ENCODE measurements at regions of chr6 and their contacts with region 1.

Region 1: GRCh38 chr6:139375232-139376016 is 976 bp upstream of the CITED2 start:
- DNase-seq: peak; percentile 90 to 93 (median 91)
- H3K4me3 ChIP-seq: peak overlapping the region; percentile 96
- H3K27ac ChIP-seq: peak overlapping the region; percentile 93 to 95
- H3K4me1 ChIP-seq: peaks cover 4% of the 10 kb centered on the region
- H3K27me3 ChIP-seq: no peaks in the 10 kb centered on the region
- CTCF ChIP-seq: no peak
- EP300 ChIP-seq: no peak
- POLR2A ChIP-seq: peak; percentile 54

Region 2: GRCh38 chr6:139457476-139457875 is 82.1 kb after region 1 on chr6:
- intact Hi-C with region 1: no loop called
- DNase-seq: no peak
- H3K4me3 ChIP-seq: no peak overlapping the region
- H3K27ac ChIP-seq: no peak overlapping the region
- H3K4me1 ChIP-seq: peaks cover 2% of the 10 kb centered on the region
- H3K27me3 ChIP-seq: no peaks in the 10 kb centered on the region
- CTCF ChIP-seq: no peak
- EP300 ChIP-seq: no peak
- POLR2A ChIP-seq: no peak

Region 3: DNA sequence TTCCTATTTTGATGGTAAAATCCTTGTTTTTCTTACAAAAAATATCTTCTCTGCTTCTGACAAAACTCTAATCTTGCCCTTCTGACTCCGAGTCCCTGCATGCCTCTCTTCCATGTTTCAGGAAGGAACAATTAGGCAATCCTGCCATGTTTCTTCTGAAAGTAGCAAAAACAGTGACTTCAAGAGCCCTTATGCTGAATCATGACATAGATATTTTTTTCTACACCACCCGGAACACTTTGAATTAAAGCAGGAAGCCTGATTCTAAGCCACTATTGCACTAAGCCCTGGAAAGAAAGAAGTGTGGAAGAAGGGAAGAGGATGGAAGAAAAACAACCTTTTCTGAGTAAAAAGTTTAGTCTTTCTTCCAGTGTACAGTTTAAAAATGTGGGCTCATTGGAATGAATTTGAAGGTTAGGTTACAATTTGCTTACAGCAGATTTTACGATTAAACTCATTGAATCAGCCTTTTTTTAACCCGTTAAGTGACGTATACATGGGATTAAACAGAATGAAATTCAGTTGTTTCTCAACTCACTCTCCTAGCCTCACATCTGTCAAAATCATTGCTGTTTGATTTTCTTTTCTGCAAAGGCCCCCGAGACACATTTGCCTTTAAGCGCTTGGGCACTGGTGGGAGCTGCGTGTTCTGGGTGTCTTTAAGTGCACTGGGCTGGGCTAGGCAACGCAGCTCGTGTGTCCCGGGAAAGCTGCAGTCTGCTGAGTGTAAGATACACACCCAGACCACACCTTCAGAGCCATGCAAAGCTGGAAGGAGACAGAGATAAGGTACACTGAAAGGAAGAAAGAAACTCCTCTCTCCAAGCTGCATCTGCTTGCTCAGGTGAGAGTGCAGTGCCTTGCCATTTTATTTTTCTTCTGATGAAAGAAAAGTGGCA is 158.4 kb after region 1 on chr6:
- intact Hi-C with region 1: loop called in 1 of 4 experiments (anchors 5 kb)
- DNase-seq: peak in 2 of 5 donors; percentile 29 to 46
- H3K4me3 ChIP-seq: no peak overlapping the region
- H3K27ac ChIP-seq: peak overlapping the region in 1 of 2 donors; percentile 76
- H3K4me1 ChIP-seq: peaks cover 10% of the 10 kb centered on the region
- H3K27me3 ChIP-seq: no peaks in the 10 kb centered on the region
- CTCF ChIP-seq: no peak
- EP300 ChIP-seq: no peak
- POLR2A ChIP-seq: no peak

Region 4: DNA sequence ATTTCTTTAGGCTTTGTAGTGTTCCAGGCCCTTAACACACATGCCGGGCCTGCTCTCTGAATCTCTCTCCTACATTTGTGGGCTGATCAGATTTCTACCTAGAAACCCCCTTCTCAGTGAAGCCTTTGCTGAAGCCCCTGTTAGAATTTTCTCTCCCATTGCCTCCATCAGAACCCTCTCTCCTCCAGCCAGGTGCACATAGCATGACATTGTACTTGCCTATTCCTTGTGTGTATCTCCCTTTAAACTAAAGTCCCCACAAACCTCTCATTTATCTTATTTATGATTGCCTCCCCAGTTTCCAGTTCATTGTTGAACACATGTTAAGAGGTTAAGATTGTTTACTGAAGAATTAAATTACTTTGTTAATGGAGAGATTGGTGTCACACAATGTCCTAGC is 324.5 kb after region 1 on chr6:
- intact Hi-C with region 1: loop called in 1 of 4 experiments (anchors 5 kb)
- DNase-seq: no peak
- H3K4me3 ChIP-seq: no peak overlapping the region
- H3K27ac ChIP-seq: no peak overlapping the region
- H3K4me1 ChIP-seq: peaks cover 2% of the 10 kb centered on the region
- H3K27me3 ChIP-seq: no peaks in the 10 kb centered on the region
- CTCF ChIP-seq: no peak
- EP300 ChIP-seq: no peak
- POLR2A ChIP-seq: no peak

Region 5: DNA sequence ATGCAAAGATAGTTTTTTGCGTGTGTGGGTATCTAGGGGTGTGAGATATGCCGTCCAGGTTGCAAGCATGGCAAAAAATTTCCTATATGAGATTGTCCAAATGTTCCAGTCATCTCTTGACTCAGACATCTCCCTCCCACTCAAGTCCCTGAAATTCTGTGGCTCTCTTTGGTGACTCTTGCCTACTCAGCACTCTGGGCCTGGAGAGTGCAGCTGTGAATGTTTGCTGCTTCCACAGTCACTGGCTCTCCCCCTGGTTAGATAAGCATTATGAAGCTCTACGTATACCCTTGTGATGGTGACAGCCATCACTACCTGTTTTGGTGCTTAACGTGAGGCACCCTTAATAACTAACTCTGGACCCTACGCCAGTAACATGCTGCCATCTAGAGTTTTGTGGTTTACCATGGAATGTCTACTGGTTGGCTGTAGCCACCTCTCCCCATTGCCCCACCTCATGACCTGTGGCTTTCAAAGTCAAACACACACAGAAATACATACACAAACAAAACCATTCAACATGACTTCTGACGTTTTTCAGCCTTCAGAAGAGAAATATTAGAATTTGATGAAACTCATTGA is 620.9 kb after region 1 on chr6:
- intact Hi-C with region 1: loop called in 1 of 4 experiments (anchors 10 kb)
- DNase-seq: no peak
- H3K4me3 ChIP-seq: no peak overlapping the region
- H3K27ac ChIP-seq: no peak overlapping the region
- H3K4me1 ChIP-seq: no peaks in the 10 kb centered on the region
- H3K27me3 ChIP-seq: no peaks in the 10 kb centered on the region
- CTCF ChIP-seq: no peak
- EP300 ChIP-seq: no peak
- POLR2A ChIP-seq: no peak

Region 6: GRCh38 chr6:140436013-140436811 is 1060.8 kb after region 1 on chr6:
- intact Hi-C with region 1: loop called in 2 of 4 experiments (anchors 5 to 10 kb)
- DNase-seq: no peak
- H3K4me3 ChIP-seq: no peak overlapping the region
- H3K27ac ChIP-seq: no peak overlapping the region
- H3K4me1 ChIP-seq: peaks cover 5% of the 10 kb centered on the region
- H3K27me3 ChIP-seq: no peaks in the 10 kb centered on the region
- CTCF ChIP-seq: no peak
- EP300 ChIP-seq: no peak
- POLR2A ChIP-seq: no peak